CD4-positive, alpha-beta T cell (primary cell): ENCODE measurements at regions of chr17 and their contacts with region 1.

Region 1: GRCh38 chr17:1724506-1725362 is at the start of gene WDR81:
- DNase-seq: peak; percentile 68 to 94 (median 82)
- ATAC-seq: peak; percentile 75
- H3K4me3 ChIP-seq: peak within 1 kb of the TSS; percentile 60
- H3K4me3 Mint-ChIP-seq: peak within 1 kb of the TSS; percentile 86
- H3K27ac ChIP-seq: peak within 1 kb of the TSS; percentile 34 to 35
- H3K27ac Mint-ChIP-seq: peak within 1 kb of the TSS; percentile 85
- H3K4me1 ChIP-seq: peaks cover 85% of the 10 kb centered on the region
- H3K4me1 Mint-ChIP-seq: peaks cover 33% of the 10 kb centered on the region
- H3K27me3 ChIP-seq: no peaks in the 10 kb centered on the region
- H3K27me3 Mint-ChIP-seq: no peaks in the 10 kb centered on the region
- CTCF ChIP-seq: no peak
- total RNA-seq, gene WDR81: 24.8 to 25.0 TPM

Region 2: DNA sequence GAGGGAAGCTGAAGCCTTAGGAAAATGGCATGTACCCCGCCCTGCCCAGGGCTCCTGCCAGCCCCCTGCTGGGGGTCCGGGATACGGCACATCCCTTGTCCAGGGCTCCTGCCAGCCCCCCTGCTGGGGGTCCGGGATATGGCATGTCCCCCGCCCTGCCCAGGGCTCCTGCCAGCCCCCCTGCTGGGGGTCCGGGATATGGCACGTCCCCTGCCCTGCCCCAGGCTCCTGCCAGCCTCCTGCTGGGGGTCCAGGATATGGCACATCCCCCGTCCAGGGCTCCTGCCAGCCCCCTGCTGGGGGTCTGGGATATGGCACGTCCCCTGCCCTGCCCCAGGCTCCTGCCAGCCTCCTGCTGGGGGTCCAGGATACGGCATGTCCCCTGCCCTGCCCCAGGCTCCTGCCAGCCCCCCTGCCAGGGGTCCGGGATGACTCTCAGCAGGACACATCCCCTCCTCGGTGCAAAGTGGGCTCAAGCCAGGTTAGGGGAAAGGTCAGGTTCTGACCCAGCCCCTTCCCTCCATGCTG is 1415.3 kb before region 1 on chr17:
- CTCF ChIA-PET with region 1: no interaction called
- POLR2A ChIA-PET with region 1: no interaction called
- intact Hi-C with region 1: no loop called
- DNase-seq: peak in 3 of 14 experiments; percentile 8 to 65 (median 57)
- ATAC-seq: peak; percentile 45
- H3K4me3 ChIP-seq: no peak overlapping the region
- H3K4me3 Mint-ChIP-seq: no peak overlapping the region
- H3K27ac ChIP-seq: no peak overlapping the region
- H3K27ac Mint-ChIP-seq: no peak overlapping the region
- H3K4me1 ChIP-seq: no peaks in the 10 kb centered on the region
- H3K4me1 Mint-ChIP-seq: no peaks in the 10 kb centered on the region
- H3K27me3 ChIP-seq: no peaks in the 10 kb centered on the region
- H3K27me3 Mint-ChIP-seq: no peaks in the 10 kb centered on the region
- CTCF ChIP-seq: no peak

Region 3: DNA sequence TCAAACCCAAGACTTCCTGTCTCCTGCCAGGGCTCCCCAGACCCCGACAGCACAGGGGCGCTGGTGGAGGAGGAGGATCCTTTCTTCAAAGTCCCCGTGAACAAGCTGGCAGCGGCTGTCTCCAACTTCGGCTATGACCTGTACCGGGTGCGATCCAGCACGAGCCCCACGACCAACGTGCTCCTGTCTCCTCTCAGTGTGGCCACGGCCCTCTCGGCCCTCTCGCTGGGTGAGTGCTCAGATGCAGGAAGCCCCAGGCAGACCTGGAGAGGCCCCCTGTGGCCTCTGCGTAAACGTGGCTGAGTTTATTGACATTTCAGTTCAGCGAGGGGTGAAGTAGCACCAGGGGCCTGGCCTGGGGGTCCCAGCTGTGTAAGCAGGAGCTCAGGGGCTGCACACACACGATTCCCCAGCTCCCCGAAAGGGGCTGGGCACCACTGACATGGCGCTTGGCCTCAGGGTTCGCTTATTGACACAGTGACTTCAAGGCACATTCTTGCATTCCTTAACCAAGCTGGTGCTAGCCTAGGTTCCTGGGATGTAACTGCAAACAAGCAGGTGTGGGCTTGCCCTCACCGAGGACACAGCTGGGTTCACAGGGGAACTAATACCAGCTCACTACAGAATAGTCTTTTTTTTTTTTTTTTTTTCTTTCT is 45.2 kb after region 1 on chr17:
- CTCF ChIA-PET with region 1: interaction called, 4 read pairs
- POLR2A ChIA-PET with region 1: interaction called, 34 read pairs
- intact Hi-C with region 1: no loop called
- DNase-seq: peak in 3 of 14 experiments; percentile 8 to 26 (median 12)
- ATAC-seq: peak; percentile 53
- H3K4me3 ChIP-seq: peak overlapping the region; percentile 7
- H3K4me3 Mint-ChIP-seq: peak overlapping the region; percentile 58
- H3K27ac ChIP-seq: peak overlapping the region in 1 of 2 donors; percentile 34
- H3K27ac Mint-ChIP-seq: peak overlapping the region; percentile 82
- H3K4me1 ChIP-seq: peaks cover 28% of the 10 kb centered on the region
- H3K4me1 Mint-ChIP-seq: peaks cover 18% of the 10 kb centered on the region
- H3K27me3 ChIP-seq: no peaks in the 10 kb centered on the region
- H3K27me3 Mint-ChIP-seq: no peaks in the 10 kb centered on the region
- CTCF ChIP-seq: no peak

Region 4: GRCh38 chr17:1829592-1830257 is 105.0 kb after region 1 on chr17 and contains the starts of genes RPA1 and SMYD4:
- CTCF ChIA-PET with region 1: interaction called, 3 read pairs
- POLR2A ChIA-PET with region 1: interaction called, 16 read pairs
- intact Hi-C with region 1: loop called in 1 of 2 experiments (anchors 2 kb)
- DNase-seq: peak; percentile 71 to 95 (median 84)
- ATAC-seq: peak; percentile 98
- H3K4me3 ChIP-seq: peak within 1 kb of the TSS; percentile 87
- H3K4me3 Mint-ChIP-seq: peak within 1 kb of the TSS; percentile 99
- H3K27ac ChIP-seq: peak within 1 kb of the TSS; percentile 61 to 81
- H3K27ac Mint-ChIP-seq: peak within 1 kb of the TSS; percentile 90
- H3K4me1 ChIP-seq: peaks cover 51% of the 10 kb centered on the region
- H3K4me1 Mint-ChIP-seq: peaks cover 66% of the 10 kb centered on the region
- H3K27me3 ChIP-seq: no peaks in the 10 kb centered on the region
- H3K27me3 Mint-ChIP-seq: no peaks in the 10 kb centered on the region
- CTCF ChIP-seq: no peak
- total RNA-seq, gene RPA1: 38.6 to 38.7 TPM
- total RNA-seq, gene SMYD4: 9.3 to 10.6 TPM

Region 5: DNA sequence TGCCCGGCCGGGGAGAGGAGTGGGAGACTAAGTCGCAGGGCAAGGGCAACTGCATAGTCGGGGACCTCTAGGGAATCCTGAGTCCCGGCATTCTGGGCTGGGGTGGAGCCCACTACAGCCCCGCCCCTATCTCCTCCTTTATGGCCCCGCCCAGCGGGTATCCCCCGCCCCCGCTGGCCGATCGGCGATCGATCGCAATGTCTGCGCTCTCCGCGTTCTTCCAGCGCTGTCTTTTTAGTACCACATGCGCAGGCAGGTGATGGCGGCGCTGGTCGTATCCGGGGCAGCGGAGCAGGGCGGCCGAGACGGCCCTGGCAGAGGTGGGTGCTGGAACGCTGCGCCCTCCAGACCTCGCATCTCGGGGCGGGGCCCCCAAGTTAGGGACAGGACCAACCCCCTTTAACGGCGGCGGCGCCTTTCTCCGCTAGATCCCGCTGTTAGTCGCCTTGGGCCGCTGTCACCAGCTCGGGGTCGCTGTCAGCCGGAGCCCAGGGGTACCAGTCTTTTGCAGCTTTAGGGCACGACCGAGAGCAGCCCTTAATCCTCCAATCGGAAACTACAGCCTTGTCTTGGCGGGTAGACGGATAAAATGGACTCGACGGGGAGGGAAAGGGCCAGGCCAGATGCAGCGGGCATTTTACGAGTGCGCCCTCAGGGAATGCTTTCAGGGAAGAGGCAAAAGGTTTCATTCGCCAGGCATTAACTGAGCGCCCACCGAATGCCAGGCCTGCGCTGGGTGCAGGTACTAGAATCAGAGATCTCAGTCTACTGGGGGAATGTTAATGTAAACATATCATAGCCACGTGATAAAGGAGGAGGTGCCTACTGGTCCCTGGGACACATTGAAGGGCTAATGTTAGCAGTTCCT is 305.4 kb after region 1 on chr17 and contains the start of gene DPH1:
- CTCF ChIA-PET with region 1: no interaction called
- POLR2A ChIA-PET with region 1: interaction called, 4 read pairs
- intact Hi-C with region 1: loop called in 1 of 2 experiments (anchors 5 kb)
- DNase-seq: peak; percentile 74 to 92 (median 81)
- ATAC-seq: peak; percentile 82
- H3K4me3 ChIP-seq: peak within 1 kb of the TSS; percentile 100
- H3K4me3 Mint-ChIP-seq: peak within 1 kb of the TSS; percentile 94
- H3K27ac ChIP-seq: peak within 1 kb of the TSS; percentile 60 to 70
- H3K27ac Mint-ChIP-seq: peak within 1 kb of the TSS; percentile 86
- H3K4me1 ChIP-seq: peaks cover 45% of the 10 kb centered on the region
- H3K4me1 Mint-ChIP-seq: peaks cover 34% of the 10 kb centered on the region
- H3K27me3 ChIP-seq: peaks cover 12 to 16% of the 10 kb centered on the region in 2 experiments
- H3K27me3 Mint-ChIP-seq: peaks cover 26% of the 10 kb centered on the region
- CTCF ChIP-seq: no peak
- total RNA-seq, gene DPH1: 96.4 to 101 TPM